AG04449 (cell line): ENCODE measurements at regions of chr4 and their contacts with region 1.

Region 1: GRCh38 chr4:158172261-158173258 is at the start of gene GASK1B:
- DNase-seq: no peak
- H3K4me3 ChIP-seq: peak within 1 kb of the TSS; percentile 42
- CTCF ChIP-seq: peak; percentile 48

Region 2: GRCh38 chr4:157992038-157992705 is 180.4 kb before region 1 on chr4:
- CTCF ChIA-PET with region 1: interaction called, 45 read pairs
- POLR2A ChIA-PET with region 1: no interaction called
- DNase-seq: no peak
- H3K4me3 ChIP-seq: no peak overlapping the region
- CTCF ChIP-seq: peak; percentile 28

Region 3: GRCh38 chr4:158003212-158003611 is 169.3 kb before region 1 on chr4:
- CTCF ChIA-PET with region 1: interaction called, 33 read pairs
- POLR2A ChIA-PET with region 1: no interaction called
- DNase-seq: no peak
- H3K4me3 ChIP-seq: no peak overlapping the region
- CTCF ChIP-seq: no peak

Region 4: GRCh38 chr4:158015240-158015639 is 157.3 kb before region 1 on chr4:
- CTCF ChIA-PET with region 1: interaction called, 26 read pairs
- POLR2A ChIA-PET with region 1: no interaction called
- DNase-seq: no peak
- H3K4me3 ChIP-seq: no peak overlapping the region
- CTCF ChIP-seq: no peak

Region 5: GRCh38 chr4:158161551-158162354 is 10.8 kb before region 1 on chr4:
- CTCF ChIA-PET with region 1: interaction called, 37 read pairs
- POLR2A ChIA-PET with region 1: no interaction called
- DNase-seq: no peak
- H3K4me3 ChIP-seq: no peak overlapping the region
- CTCF ChIP-seq: no peak

Region 6: DNA sequence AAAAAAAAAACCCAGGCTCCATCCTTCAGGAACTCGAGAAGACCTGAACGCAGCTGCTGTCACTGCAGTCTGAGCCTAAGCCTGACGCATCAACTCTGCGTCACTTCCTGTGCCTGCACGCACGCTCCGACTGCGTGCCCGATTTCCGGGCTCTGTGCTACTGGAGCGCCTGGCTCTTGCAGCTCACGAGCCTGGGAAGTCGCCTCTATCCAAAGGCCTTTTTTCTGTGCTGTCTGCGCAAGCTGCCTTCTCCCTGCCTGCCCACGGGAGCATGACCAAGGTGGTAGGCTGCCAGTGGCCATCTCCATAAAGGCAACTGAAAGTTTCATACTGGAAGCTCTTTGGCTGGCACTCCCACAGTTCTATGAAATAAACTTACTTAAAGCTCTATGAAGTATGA is 10.2 kb after region 1 on chr4:
- CTCF ChIA-PET with region 1: interaction called, 19 read pairs
- POLR2A ChIA-PET with region 1: no interaction called
- DNase-seq: no peak
- H3K4me3 ChIP-seq: no peak overlapping the region
- CTCF ChIP-seq: no peak

Region 7: DNA sequence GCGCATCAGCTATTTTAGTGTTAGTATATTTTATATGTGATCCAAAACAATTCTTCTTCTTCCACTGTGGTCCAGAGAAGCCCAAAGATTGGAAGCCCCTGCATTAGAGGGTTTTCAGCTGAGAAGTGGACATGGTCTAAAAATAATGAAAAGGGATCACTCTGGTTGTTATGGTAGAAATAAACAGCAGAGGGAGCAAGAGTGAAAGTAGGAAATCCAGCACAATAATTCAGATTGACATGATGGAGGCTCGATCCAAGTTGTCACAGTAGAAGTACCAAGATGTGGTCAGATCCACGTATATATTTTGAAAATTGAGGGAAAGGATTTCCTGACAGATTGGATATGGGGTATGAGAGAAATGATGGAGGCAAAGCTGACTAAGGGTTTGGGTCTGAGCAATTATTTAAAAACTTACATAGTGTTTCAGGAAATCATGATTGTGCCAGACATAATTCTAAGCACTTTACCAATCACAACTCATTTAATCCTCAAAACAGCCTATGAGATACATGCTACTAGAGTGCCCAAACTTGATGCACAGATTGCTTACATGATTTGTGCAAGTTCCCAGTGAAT is 20.7 kb after region 1 on chr4:
- CTCF ChIA-PET with region 1: interaction called, 82 read pairs
- POLR2A ChIA-PET with region 1: no interaction called
- DNase-seq: no peak
- H3K4me3 ChIP-seq: no peak overlapping the region
- CTCF ChIP-seq: peak; percentile 17